ENCODE measurements at regions of chr10 and their contacts with region 1.

Region 1: DNA sequence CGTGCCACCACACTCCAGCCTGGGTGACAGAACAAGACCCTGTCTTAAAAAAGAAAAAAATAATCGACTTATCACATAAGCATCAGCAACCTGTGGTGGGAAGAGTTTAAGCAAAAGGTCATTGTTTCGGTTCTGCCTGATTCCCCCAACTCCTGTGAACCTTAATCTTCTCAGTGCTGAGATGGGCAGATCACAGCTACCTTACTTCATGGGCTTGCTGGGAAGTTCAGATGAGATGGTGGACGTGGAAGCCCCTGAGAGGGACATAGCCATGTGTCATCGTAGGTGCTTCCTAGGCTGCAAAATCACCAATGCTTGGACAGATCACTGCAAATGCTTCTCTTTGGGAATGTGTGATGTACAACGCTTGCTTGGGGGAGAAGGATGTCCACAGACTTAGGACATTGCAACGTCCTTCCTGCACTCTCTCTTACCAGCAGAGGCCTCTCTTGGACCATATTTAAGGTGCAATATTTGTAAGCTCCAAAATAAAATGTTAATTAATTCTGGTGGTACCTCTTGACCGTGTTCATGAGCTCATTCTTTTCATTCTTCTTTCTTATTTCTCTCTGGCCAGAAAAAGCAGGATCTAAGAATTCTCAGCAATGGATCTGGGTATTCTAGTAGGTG is 8.6 kb downstream of the GJD4 start:
- DNase-seq: peak; percentile 66
- H3K4me3 ChIP-seq: no peak overlapping the region
- H3K27ac ChIP-seq: no peak overlapping the region
- H3K4me1 ChIP-seq: peaks cover 3% of the 10 kb centered on the region
- H3K27me3 ChIP-seq: no peaks in the 10 kb centered on the region
- CTCF ChIP-seq: peak; percentile 63

Region 2: DNA sequence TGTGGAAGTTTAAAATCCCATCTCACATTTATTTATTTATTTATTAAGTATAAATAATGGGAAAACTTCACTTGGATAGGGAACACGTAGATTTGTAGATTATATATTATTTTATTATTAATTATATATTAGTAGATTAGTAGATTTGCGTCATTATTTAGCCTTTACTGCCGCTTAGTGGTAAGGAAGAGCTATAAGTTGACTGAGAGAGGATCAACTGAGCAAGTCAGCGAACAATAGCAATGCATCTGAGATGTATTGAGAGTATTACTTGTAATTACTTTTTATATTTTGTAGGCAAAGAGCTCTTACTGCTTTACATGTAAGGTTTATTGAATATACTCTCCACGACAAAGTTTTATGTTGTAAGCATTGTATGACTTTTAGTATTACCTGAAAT is 1267.2 kb after region 1 on chr10:
- CTCF ChIA-PET with region 1: interaction called, 14 read pairs
- POLR2A ChIA-PET with region 1: no interaction called
- intact Hi-C with region 1: loop called (anchors 5 kb)
- DNase-seq: peak; percentile 54
- H3K4me3 ChIP-seq: no peak overlapping the region
- H3K27ac ChIP-seq: no peak overlapping the region
- H3K4me1 ChIP-seq: peaks cover 7% of the 10 kb centered on the region
- H3K27me3 ChIP-seq: no peaks in the 10 kb centered on the region
- CTCF ChIP-seq: peak; percentile 63; the same call in 1 of the 2 replicates